GM10248 (cell line): ENCODE measurements at regions of chr3 and their contacts with region 1.

Region 1: GRCh38 chr3:137110484-137110883 is 152.7 kb downstream of the IL20RB start:
- DNase-seq: peak; percentile 46
- CTCF ChIP-seq: peak; percentile 49

Region 2: DNA sequence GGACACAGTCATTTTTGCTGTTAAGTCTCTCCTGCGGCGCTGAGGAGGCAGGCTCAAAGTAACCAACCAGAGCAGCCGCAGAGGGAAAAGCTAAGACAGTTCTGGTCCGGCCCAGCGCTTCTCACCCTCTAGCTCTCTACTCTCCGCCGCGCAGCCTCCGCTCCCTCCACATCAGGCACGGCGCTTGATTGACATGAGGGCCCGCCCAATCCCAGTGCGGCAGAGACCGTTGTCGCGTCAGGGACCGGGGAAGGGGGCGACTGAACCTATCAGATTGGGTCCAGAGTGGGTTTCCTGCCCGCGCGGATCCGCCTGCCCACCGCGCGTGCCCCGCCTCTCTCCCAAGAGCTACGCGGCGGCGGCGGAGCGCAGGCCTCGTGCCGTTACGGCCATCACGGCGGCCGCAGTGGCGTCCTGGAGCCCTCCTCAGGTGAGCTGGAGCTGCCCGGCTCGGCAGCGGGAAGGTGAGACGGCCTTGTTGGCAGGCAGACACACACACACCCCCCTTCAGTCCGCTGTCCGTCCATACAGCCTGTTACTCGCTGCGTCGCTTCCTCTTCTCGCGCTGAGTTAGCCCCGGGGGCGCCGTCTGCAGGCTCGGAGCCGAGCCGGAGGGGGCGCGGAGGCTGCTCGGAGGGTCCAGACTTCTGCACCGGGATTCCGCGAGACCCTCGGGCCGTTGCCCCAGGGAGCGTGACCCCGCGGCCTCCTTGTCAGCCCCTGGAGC is 248.4 kb before region 1 on chr3 and contains the start of gene NCK1:
- CTCF ChIA-PET with region 1: no interaction called
- POLR2A ChIA-PET with region 1: no interaction called
- DNase-seq: peak; percentile 97
- CTCF ChIP-seq: peak; percentile 11

Region 3: DNA sequence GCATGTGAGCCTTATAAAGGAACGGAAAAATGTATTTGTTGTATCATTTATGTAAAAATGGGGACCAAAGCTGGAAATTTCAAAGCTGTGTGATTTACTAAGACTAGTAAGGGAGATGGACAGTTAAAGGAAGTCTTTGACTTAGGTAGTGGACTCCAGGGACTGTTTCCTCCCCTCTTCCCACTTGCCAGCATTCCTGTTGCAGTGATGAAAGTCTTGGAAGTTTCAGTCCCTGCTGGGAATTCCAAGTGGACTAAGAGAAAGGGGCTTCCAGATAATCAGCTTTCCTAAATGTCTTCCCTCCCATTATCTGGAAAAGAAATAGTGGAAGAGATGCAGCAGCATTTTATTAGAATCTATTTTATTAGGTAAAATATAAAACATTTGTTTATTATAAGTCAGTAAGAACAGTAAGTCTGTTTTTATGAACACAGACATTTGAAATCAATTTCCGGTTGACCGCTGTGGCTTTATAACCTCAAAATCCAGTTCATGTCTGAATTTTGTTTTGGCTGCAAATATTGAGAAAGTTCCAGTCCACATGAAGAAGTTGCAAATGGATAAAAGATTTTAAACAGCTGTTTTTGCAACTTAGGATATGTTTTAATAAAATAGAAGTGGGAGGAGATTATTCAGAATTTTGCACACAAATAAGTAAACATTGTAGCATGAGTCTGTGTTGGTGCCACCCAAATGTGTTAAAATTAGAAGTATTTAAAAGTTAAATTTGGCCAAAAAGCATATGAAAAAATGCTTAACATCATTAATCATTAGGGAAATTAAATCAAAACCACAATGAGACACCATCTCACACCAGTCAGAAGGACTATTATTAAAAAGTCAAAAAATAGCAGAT is 10.9 kb before region 1 on chr3:
- CTCF ChIA-PET with region 1: interaction called, 34 read pairs
- POLR2A ChIA-PET with region 1: no interaction called
- DNase-seq: no peak
- CTCF ChIP-seq: no peak

Region 4: DNA sequence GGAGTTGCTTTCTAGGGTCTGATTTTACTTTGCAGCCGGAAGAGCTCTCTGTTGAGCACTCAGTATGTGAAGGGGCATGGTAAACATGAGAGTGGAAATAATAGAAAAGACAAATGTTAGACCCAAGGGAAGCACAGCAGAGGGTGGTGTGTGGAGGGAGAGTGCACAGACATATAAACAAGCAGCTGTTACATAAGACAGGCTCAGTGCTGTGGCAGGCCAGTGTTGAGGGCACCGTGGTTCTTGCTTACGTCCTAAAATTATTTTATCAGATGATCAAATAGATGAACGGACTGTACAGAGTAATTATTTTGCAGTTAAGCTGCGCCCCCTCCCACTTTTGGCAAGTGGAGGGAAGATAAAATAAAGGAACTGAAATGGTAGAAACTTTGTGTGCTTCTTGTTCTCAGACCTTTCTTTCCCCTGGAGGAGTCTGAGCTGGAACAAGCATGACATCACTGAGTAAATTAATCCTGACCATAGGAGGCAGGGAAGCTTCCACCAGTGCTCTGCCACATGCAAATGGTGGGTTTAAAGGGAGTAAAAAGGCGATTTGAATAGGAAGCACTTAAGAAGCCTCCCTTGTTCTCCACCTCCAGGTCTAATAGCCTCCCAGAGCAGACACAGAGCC is 52.9 kb after region 1 on chr3:
- CTCF ChIA-PET with region 1: interaction called, 15 read pairs
- POLR2A ChIA-PET with region 1: no interaction called
- DNase-seq: no peak
- CTCF ChIP-seq: no peak

Region 5: GRCh38 chr3:137304313-137305056 is 194.0 kb after region 1 on chr3:
- CTCF ChIA-PET with region 1: no interaction called
- POLR2A ChIA-PET with region 1: no interaction called
- DNase-seq: no peak
- CTCF ChIP-seq: no peak